Calu3 (cell line): ENCODE measurements at regions of chr18 and their contacts with region 1.

Region 1: GRCh38 chr18:34985963-34986362 is 55.2 kb upstream of the MAPRE2 start:
- DNase-seq: no peak
- H3K4me3 Mint-ChIP-seq: no peak overlapping the region
- H3K27ac Mint-ChIP-seq: no peak overlapping the region
- H3K4me1 Mint-ChIP-seq: peaks cover 10% of the 10 kb centered on the region
- H3K27me3 Mint-ChIP-seq: no peaks in the 10 kb centered on the region
- CTCF ChIP-seq: no peak

Region 2: GRCh38 chr18:34431042-34431441 is 554.9 kb before region 1 on chr18:
- CTCF ChIA-PET with region 1: no interaction called
- intact Hi-C with region 1: no loop called
- DNase-seq: no peak
- H3K4me3 Mint-ChIP-seq: no peak overlapping the region
- H3K27ac Mint-ChIP-seq: no peak overlapping the region
- H3K4me1 Mint-ChIP-seq: no peaks in the 10 kb centered on the region
- H3K27me3 Mint-ChIP-seq: peaks cover 31% of the 10 kb centered on the region
- CTCF ChIP-seq: no peak

Region 3: GRCh38 chr18:35040988-35041814 is 55.2 kb after region 1 on chr18 and contains the start of gene MAPRE2:
- CTCF ChIA-PET with region 1: no interaction called
- intact Hi-C with region 1: loop called (anchors 5 kb)
- DNase-seq: peak; percentile 99
- H3K4me3 Mint-ChIP-seq: peak within 1 kb of the TSS; percentile 95
- H3K27ac Mint-ChIP-seq: peak within 1 kb of the TSS; percentile 100
- H3K4me1 Mint-ChIP-seq: peaks cover 26% of the 10 kb centered on the region
- H3K27me3 Mint-ChIP-seq: no peaks in the 10 kb centered on the region
- CTCF ChIP-seq: no peak
- total RNA-seq, gene MAPRE2: 31.4 and 32.9 TPM in 2 replicates